ENCODE measurements at regions of chr12 and their contacts with region 1.

Region 1: GRCh38 chr12:9797722-9798619 is 29.3 kb upstream of the KLRF1 start:
- DNase-seq: peak in 1 of 2 experiments; percentile 43
- H3K4me3 ChIP-seq: no peak overlapping the region
- H3K27ac ChIP-seq: no peak overlapping the region
- H3K4me1 ChIP-seq: no peaks in the 10 kb centered on the region; a peak in 1 of 7 replicates
- H3K27me3 ChIP-seq: no peaks in the 10 kb centered on the region
- CTCF ChIP-seq: peak; percentile 53 to 95 (median 94)
- EP300 ChIP-seq: peak in 1 of 2 experiments; percentile 67; a peak in 1 of 3 replicates
- POLR2A ChIP-seq: no peak
- RAD21 ChIP-seq: peak; percentile 98 to 99

Region 2: GRCh38 chr12:9741726-9742125 is 56.2 kb before region 1 on chr12:
- CTCF ChIA-PET with region 1: interaction called, 278 read pairs
- POLR2A ChIA-PET with region 1: no interaction called
- DNase-seq: no peak
- H3K4me3 ChIP-seq: no peak overlapping the region
- H3K27ac ChIP-seq: no peak overlapping the region
- H3K4me1 ChIP-seq: no peaks in the 10 kb centered on the region
- H3K27me3 ChIP-seq: no peaks in the 10 kb centered on the region
- CTCF ChIP-seq: no peak
- EP300 ChIP-seq: no peak
- POLR2A ChIP-seq: no peak
- RAD21 ChIP-seq: no peak

Region 3: GRCh38 chr12:9827209-9827888 is 29.4 kb after region 1 on chr12 and contains the start of gene KLRF1:
- CTCF ChIA-PET with region 1: no interaction called
- POLR2A ChIA-PET with region 1: no interaction called
- DNase-seq: no peak
- H3K4me3 ChIP-seq: no peak within 1 kb of the TSS
- H3K27ac ChIP-seq: no peak within 1 kb of the TSS
- H3K4me1 ChIP-seq: no peaks in the 10 kb centered on the region
- H3K27me3 ChIP-seq: no peaks in the 10 kb centered on the region
- CTCF ChIP-seq: no peak
- EP300 ChIP-seq: no peak
- POLR2A ChIP-seq: no peak
- RAD21 ChIP-seq: no peak
- total RNA-seq, gene KLRF1: not detected in 2 replicates

Measured in H1 (cell line).